GM12878 (cell line): ENCODE measurements at regions of chr1 and their contacts with region 1.

Region 1: GRCh38 chr1:107056426-107057196 is at the start of gene PRMT6:
- DNase-seq: peak; percentile 25
- ATAC-seq: peak; percentile 95
- H3K4me3 ChIP-seq: peak within 1 kb of the TSS; percentile 94
- H3K27ac ChIP-seq: peak within 1 kb of the TSS; percentile 82
- H3K4me1 ChIP-seq: no peaks in the 10 kb centered on the region; the same call in 1 of the 2 replicates
- H3K27me3 ChIP-seq: no peaks in the 10 kb centered on the region
- CTCF ChIP-seq: peak in 2 of 3 experiments; percentile 21 to 22; a peak in 2 of 6 replicates
- EP300 ChIP-seq: no peak
- POLR2A ChIP-seq: peak; percentile 83
- RAD21 ChIP-seq: no peak; the same call in 1 of the 2 replicates
- polyA plus RNA-seq, gene PRMT6: 6.0 to 10.5 TPM

Region 2: GRCh38 chr1:106957783-106958182 is 98.8 kb before region 1 on chr1:
- CTCF ChIA-PET with region 1: no interaction called
- POLR2A ChIA-PET with region 1: no interaction called
- RAD21 ChIA-PET with region 1: interaction called, 5 read pairs
- SMC1A ChIA-PET with region 1: interaction called, 12 read pairs
- in situ Hi-C with region 1: no loop called
- intact Hi-C with region 1: no loop called
- DNase-seq: no peak
- ATAC-seq: no peak
- H3K4me3 ChIP-seq: no peak overlapping the region
- H3K27ac ChIP-seq: no peak overlapping the region
- H3K4me1 ChIP-seq: no peaks in the 10 kb centered on the region
- H3K27me3 ChIP-seq: no peaks in the 10 kb centered on the region; a peak in 1 of 4 replicates
- CTCF ChIP-seq: peak; percentile 16 to 27 (median 18); a peak in 4 of 6 replicates
- EP300 ChIP-seq: no peak
- POLR2A ChIP-seq: no peak
- RAD21 ChIP-seq: peak; percentile 48

Region 3: GRCh38 chr1:106995970-106996369 is 60.6 kb before region 1 on chr1:
- CTCF ChIA-PET with region 1: no interaction called
- POLR2A ChIA-PET with region 1: no interaction called
- RAD21 ChIA-PET with region 1: interaction called, 3 read pairs
- SMC1A ChIA-PET with region 1: interaction called, 4 read pairs
- in situ Hi-C with region 1: no loop called
- intact Hi-C with region 1: loop called (anchors 1 kb)
- DNase-seq: peak; percentile 86
- ATAC-seq: peak; percentile 96
- H3K4me3 ChIP-seq: no peak overlapping the region
- H3K27ac ChIP-seq: no peak overlapping the region
- H3K4me1 ChIP-seq: no peaks in the 10 kb centered on the region
- H3K27me3 ChIP-seq: no peaks in the 10 kb centered on the region
- CTCF ChIP-seq: no peak
- EP300 ChIP-seq: peak; percentile 97 to 99
- POLR2A ChIP-seq: no peak
- RAD21 ChIP-seq: no peak; the same call in 1 of the 2 replicates

Region 4: DNA sequence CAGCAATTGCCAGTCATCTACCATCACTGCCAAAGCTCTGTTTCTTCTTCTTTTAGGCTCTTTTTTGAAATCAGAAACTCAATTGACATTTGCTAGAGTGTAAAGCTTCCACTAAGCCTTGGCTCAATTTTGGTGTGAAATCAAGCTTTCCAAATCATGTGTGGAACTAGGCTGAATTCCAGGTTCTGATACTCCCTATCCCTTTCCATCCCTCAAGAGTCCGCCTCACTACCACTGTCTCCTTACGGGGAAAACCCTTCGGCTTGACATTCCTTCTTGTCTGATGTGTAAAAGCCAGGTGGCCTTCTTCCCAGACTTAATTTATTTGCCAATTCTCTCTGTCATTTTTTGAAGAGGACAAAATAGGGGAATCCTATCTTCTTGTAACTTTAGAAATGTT is 47.3 kb before region 1 on chr1:
- CTCF ChIA-PET with region 1: interaction called, 5 read pairs
- POLR2A ChIA-PET with region 1: interaction called, 4 read pairs
- RAD21 ChIA-PET with region 1: interaction called, 16 read pairs
- SMC1A ChIA-PET with region 1: interaction called, 6 read pairs
- in situ Hi-C with region 1: no loop called
- intact Hi-C with region 1: loop called (anchors 2 kb)
- DNase-seq: no peak
- ATAC-seq: no peak
- H3K4me3 ChIP-seq: no peak overlapping the region
- H3K27ac ChIP-seq: no peak overlapping the region
- H3K4me1 ChIP-seq: no peaks in the 10 kb centered on the region
- H3K27me3 ChIP-seq: no peaks in the 10 kb centered on the region
- CTCF ChIP-seq: no peak
- EP300 ChIP-seq: no peak
- POLR2A ChIP-seq: no peak
- RAD21 ChIP-seq: no peak

Region 5: GRCh38 chr1:107016376-107016978 is 40.1 kb before region 1 on chr1:
- CTCF ChIA-PET with region 1: interaction called, 6 read pairs
- POLR2A ChIA-PET with region 1: interaction called, 4 read pairs
- RAD21 ChIA-PET with region 1: interaction called, 16 read pairs
- SMC1A ChIA-PET with region 1: interaction called, 14 read pairs
- in situ Hi-C with region 1: no loop called
- intact Hi-C with region 1: loop called (anchors 2 kb)
- DNase-seq: peak; percentile 28
- ATAC-seq: peak; percentile 96
- H3K4me3 ChIP-seq: peak overlapping the region; percentile 33; the same call in 1 of the 2 replicates
- H3K27ac ChIP-seq: no peak overlapping the region
- H3K4me1 ChIP-seq: no peaks in the 10 kb centered on the region
- H3K27me3 ChIP-seq: no peaks in the 10 kb centered on the region
- CTCF ChIP-seq: no peak
- EP300 ChIP-seq: no peak
- POLR2A ChIP-seq: no peak
- RAD21 ChIP-seq: no peak

Region 6: GRCh38 chr1:107093385-107093784 is 36.8 kb after region 1 on chr1:
- CTCF ChIA-PET with region 1: no interaction called
- POLR2A ChIA-PET with region 1: no interaction called
- RAD21 ChIA-PET with region 1: no interaction called
- SMC1A ChIA-PET with region 1: no interaction called
- in situ Hi-C with region 1: no loop called
- intact Hi-C with region 1: no loop called
- DNase-seq: no peak
- ATAC-seq: no peak
- H3K4me3 ChIP-seq: no peak overlapping the region
- H3K27ac ChIP-seq: no peak overlapping the region
- H3K4me1 ChIP-seq: no peaks in the 10 kb centered on the region
- H3K27me3 ChIP-seq: no peaks in the 10 kb centered on the region
- CTCF ChIP-seq: no peak
- EP300 ChIP-seq: no peak
- POLR2A ChIP-seq: no peak
- RAD21 ChIP-seq: no peak

Region 7: GRCh38 chr1:107142140-107142542 is 85.5 kb after region 1 on chr1:
- CTCF ChIA-PET with region 1: interaction called, 3 read pairs
- POLR2A ChIA-PET with region 1: interaction called, 5 read pairs
- RAD21 ChIA-PET with region 1: interaction called, 3 read pairs
- SMC1A ChIA-PET with region 1: interaction called, 3 read pairs
- in situ Hi-C with region 1: no loop called
- intact Hi-C with region 1: loop called (anchors 5 kb)
- DNase-seq: no peak
- ATAC-seq: peak; percentile 47
- H3K4me3 ChIP-seq: peak overlapping the region; percentile 55; the same call in 1 of the 2 replicates
- H3K27ac ChIP-seq: no peak overlapping the region
- H3K4me1 ChIP-seq: no peaks in the 10 kb centered on the region
- H3K27me3 ChIP-seq: peaks cover 3 to 6% of the 10 kb centered on the region in 2 experiments; a peak in 3 of 4 replicates
- CTCF ChIP-seq: peak; percentile 45 to 50 (median 49); a peak in 5 of 6 replicates
- EP300 ChIP-seq: no peak
- POLR2A ChIP-seq: no peak
- RAD21 ChIP-seq: peak; percentile 62

Region 8: GRCh38 chr1:107246775-107247345 is 190.2 kb after region 1 on chr1:
- CTCF ChIA-PET with region 1: no interaction called
- POLR2A ChIA-PET with region 1: no interaction called
- RAD21 ChIA-PET with region 1: no interaction called
- SMC1A ChIA-PET with region 1: no interaction called
- in situ Hi-C with region 1: no loop called
- intact Hi-C with region 1: no loop called
- DNase-seq: peak; percentile 33
- ATAC-seq: peak; percentile 78
- H3K4me3 ChIP-seq: no peak overlapping the region
- H3K27ac ChIP-seq: no peak overlapping the region
- H3K4me1 ChIP-seq: no peaks in the 10 kb centered on the region; the same call in 1 of the 2 replicates
- H3K27me3 ChIP-seq: no peaks in the 10 kb centered on the region
- CTCF ChIP-seq: no peak
- EP300 ChIP-seq: no peak
- POLR2A ChIP-seq: no peak
- RAD21 ChIP-seq: no peak